ENCODE measurements at regions of chr15 and their contacts with region 1.

Region 1: GRCh38 chr15:75799190-75799589 is 44.1 kb upstream of the UBE2Q2 start:
- DNase-seq: no peak
- H3K4me3 ChIP-seq: no peak overlapping the region
- H3K27ac ChIP-seq: no peak overlapping the region
- H3K4me1 ChIP-seq: peaks cover 0 to 10% (median 0%) of the 10 kb centered on the region in 3 donors
- H3K27me3 ChIP-seq: peaks cover 0 to 53% (median 0%) of the 10 kb centered on the region in 4 donors
- CTCF ChIP-seq: no peak
- POLR2A ChIP-seq: no peak

Region 2: GRCh38 chr15:75493732-75494131 is 305.5 kb before region 1 on chr15:
- intact Hi-C with region 1: no loop called
- DNase-seq: no peak
- H3K4me3 ChIP-seq: no peak overlapping the region
- H3K27ac ChIP-seq: no peak overlapping the region
- H3K4me1 ChIP-seq: no peaks in the 10 kb centered on the region
- H3K27me3 ChIP-seq: no peaks in the 10 kb centered on the region
- CTCF ChIP-seq: no peak
- POLR2A ChIP-seq: no peak

Region 3: GRCh38 chr15:75694241-75695182 is 104.7 kb before region 1 on chr15:
- intact Hi-C with region 1: loop called (anchors 5 kb)
- DNase-seq: peak; percentile 15
- H3K4me3 ChIP-seq: no peak overlapping the region
- H3K27ac ChIP-seq: peak overlapping the region; percentile 63 to 92 (median 86)
- H3K4me1 ChIP-seq: peaks cover 46 to 69% (median 60%) of the 10 kb centered on the region in 3 donors
- H3K27me3 ChIP-seq: peaks cover 0 to 83% (median 0%) of the 10 kb centered on the region in 4 donors
- CTCF ChIP-seq: peak in 4 of 6 experiments; percentile 25 to 50 (median 38)
- POLR2A ChIP-seq: no peak

Measured in esophagus squamous epithelium (tissue), 5 donors.